ENCODE measurements at regions of chr5 and their contacts with region 1.

Region 1: DNA sequence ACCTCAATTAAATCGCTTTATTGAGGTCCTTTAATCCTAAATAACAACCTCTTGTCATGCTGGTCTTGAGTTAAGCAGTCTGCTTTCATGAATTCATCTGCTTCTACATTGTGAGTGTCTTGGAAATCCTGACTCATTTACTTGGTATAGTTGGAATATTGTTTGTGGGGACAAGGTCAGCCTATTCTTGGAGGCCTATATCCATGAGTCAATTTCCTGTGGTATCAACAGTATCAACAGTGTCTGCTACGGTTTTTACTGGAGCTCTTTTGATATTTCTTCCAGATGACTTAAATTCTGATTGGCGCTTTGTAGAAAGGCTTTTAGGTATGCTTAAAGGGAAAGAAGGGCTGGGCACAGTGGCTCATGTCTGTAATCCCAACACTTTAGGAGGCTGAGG is 71.2 kb upstream of the PARP8 start:
- DNase-seq: no peak
- ATAC-seq: no peak
- H3K4me3 ChIP-seq: no peak overlapping the region
- H3K4me3 Mint-ChIP-seq: no peak overlapping the region
- H3K27ac ChIP-seq: no peak overlapping the region
- H3K27ac Mint-ChIP-seq: peak overlapping the region; percentile 12
- H3K4me1 ChIP-seq: peaks cover 38% of the 10 kb centered on the region
- H3K4me1 Mint-ChIP-seq: peaks cover 48% of the 10 kb centered on the region
- H3K27me3 ChIP-seq: no peaks in the 10 kb centered on the region
- H3K27me3 Mint-ChIP-seq: no peaks in the 10 kb centered on the region
- CTCF ChIP-seq: no peak

Region 2: GRCh38 chr5:50547303-50547702 is 47.9 kb before region 1 on chr5:
- CTCF ChIA-PET with region 1: no interaction called
- POLR2A ChIA-PET with region 1: no interaction called
- intact Hi-C with region 1: no loop called
- DNase-seq: no peak
- ATAC-seq: no peak
- H3K4me3 ChIP-seq: no peak overlapping the region
- H3K4me3 Mint-ChIP-seq: no peak overlapping the region
- H3K27ac ChIP-seq: no peak overlapping the region
- H3K27ac Mint-ChIP-seq: peak overlapping the region; percentile 33
- H3K4me1 ChIP-seq: no peaks in the 10 kb centered on the region
- H3K4me1 Mint-ChIP-seq: peaks cover 21% of the 10 kb centered on the region
- H3K27me3 ChIP-seq: no peaks in the 10 kb centered on the region
- H3K27me3 Mint-ChIP-seq: no peaks in the 10 kb centered on the region
- CTCF ChIP-seq: no peak

Region 3: DNA sequence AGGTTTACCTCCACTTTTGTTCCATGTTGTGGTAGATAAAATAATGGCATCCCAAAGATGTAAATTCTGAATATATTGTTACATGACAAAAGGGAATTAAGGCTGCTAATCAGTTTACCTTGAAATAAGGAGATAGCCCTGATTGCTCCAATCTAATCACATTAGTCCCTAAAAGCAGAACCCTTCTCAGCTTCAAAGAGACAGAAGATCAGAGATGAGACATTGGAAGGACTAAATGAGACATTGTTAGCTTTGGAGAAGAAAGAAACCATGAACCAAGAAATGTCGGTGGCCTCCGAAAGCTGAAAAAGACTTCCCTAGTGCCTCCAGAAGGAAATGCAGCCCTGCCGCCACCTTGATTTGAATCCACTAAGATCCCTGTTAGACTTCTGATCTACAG is 11.6 kb before region 1 on chr5:
- CTCF ChIA-PET with region 1: no interaction called
- POLR2A ChIA-PET with region 1: interaction called, 3 read pairs
- intact Hi-C with region 1: loop called in 1 of 2 experiments (anchors 1 kb)
- DNase-seq: no peak
- ATAC-seq: no peak
- H3K4me3 ChIP-seq: no peak overlapping the region
- H3K4me3 Mint-ChIP-seq: no peak overlapping the region
- H3K27ac ChIP-seq: no peak overlapping the region
- H3K27ac Mint-ChIP-seq: no peak overlapping the region
- H3K4me1 ChIP-seq: no peaks in the 10 kb centered on the region
- H3K4me1 Mint-ChIP-seq: peaks cover 14% of the 10 kb centered on the region
- H3K27me3 ChIP-seq: no peaks in the 10 kb centered on the region
- H3K27me3 Mint-ChIP-seq: no peaks in the 10 kb centered on the region
- CTCF ChIP-seq: no peak

Region 4: DNA sequence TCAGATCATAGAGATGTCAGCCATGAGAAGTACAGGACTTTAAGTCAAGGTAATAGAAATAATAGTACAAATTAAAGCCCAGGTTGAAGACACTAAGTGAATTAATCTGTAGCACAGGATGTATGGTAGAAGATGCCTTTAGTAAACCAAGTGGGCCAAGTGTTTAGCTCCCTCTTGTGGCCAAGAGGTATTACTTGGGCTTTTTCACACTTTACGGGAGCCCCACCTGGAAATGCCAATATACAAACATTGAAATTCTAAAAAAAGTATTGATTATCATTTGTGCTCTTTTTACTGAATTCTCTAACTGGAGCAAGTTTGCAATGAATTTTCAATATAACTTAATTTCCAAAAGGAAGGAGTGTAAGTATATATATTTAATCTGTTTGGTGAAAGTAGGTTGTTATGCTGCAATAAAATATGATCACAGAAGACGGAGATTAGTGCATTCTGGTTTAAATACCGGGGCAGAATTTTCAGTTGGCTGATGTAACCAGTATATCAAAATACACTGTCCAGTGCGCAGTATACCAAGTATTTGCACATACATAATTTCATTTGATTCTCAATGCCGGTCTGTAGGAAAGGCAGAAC is 156.0 kb after region 1 on chr5:
- CTCF ChIA-PET with region 1: no interaction called
- POLR2A ChIA-PET with region 1: no interaction called
- intact Hi-C with region 1: loop called in 1 of 2 experiments (anchors 5 kb)
- DNase-seq: peak in 7 of 9 experiments; percentile 11 to 86 (median 45)
- ATAC-seq: peak; percentile 88
- H3K4me3 ChIP-seq: no peak overlapping the region
- H3K4me3 Mint-ChIP-seq: peak overlapping the region; percentile 40
- H3K27ac ChIP-seq: peak overlapping the region in 1 of 2 experiments; percentile 57
- H3K27ac Mint-ChIP-seq: peak overlapping the region; percentile 73
- H3K4me1 ChIP-seq: peaks cover 44% of the 10 kb centered on the region
- H3K4me1 Mint-ChIP-seq: peaks cover 60% of the 10 kb centered on the region
- H3K27me3 ChIP-seq: no peaks in the 10 kb centered on the region
- H3K27me3 Mint-ChIP-seq: no peaks in the 10 kb centered on the region
- CTCF ChIP-seq: peak; percentile 90